ENCODE measurements at regions of chr1 and their contacts with region 1.

Region 1: DNA sequence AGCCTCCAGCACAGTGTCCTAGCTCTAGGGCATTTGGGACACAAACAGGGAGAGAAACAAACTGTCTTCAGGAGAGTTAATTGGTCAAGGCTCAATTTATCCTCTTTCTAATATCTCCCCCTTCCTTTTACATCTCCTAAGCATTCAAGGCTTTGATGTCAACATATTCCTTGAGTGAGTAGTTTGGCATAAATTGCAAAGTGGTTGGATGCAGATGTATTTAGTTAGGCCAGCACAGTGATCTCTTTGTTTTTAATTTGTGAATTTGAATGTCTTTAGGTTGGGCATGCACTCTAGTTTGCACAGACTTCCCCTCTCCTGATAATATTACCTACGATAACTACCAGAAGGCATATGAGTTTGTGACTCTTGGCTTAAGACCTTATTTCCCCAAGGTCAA is 12.5 kb upstream of the OLFML2B start:
- DNase-seq: no peak
- H3K4me3 ChIP-seq: no peak overlapping the region
- H3K4me3 Mint-ChIP-seq: no peak overlapping the region
- H3K27ac ChIP-seq: no peak overlapping the region
- H3K27ac Mint-ChIP-seq: no peak overlapping the region
- H3K4me1 ChIP-seq: no peaks in the 10 kb centered on the region
- H3K4me1 Mint-ChIP-seq: no peaks in the 10 kb centered on the region
- H3K27me3 ChIP-seq: no peaks in the 10 kb centered on the region
- H3K27me3 Mint-ChIP-seq: peaks cover 17 to 49% of the 10 kb centered on the region in 2 donors

Region 2: DNA sequence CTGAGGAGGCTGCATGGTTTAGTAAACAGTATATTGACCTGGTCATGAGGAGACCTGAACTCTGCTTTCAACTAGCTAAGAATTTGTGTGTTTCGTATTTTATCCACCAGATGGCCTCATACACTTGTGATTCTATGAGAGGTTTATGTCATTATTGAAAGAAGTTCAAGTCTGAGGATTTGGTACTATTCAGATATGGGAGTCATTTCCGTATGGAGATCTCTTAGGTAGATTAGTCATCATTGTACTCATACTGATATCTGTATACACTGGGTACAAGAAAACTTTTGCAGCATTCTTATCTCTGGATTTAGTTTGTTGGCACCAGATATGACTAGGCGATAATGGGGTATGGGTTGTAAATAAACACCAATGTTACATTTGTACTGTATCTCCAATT is 243.4 kb before region 1 on chr1:
- CTCF ChIA-PET with region 1: interaction called, 25 read pairs
- POLR2A ChIA-PET with region 1: no interaction called
- DNase-seq: peak in 2 of 5 donors; percentile 19 to 44
- H3K4me3 ChIP-seq: no peak overlapping the region
- H3K4me3 Mint-ChIP-seq: no peak overlapping the region
- H3K27ac ChIP-seq: no peak overlapping the region
- H3K27ac Mint-ChIP-seq: peak overlapping the region in 1 of 8 donors; percentile 39
- H3K4me1 ChIP-seq: no peaks in the 10 kb centered on the region
- H3K4me1 Mint-ChIP-seq: peaks cover 3 to 12% (median 10%) of the 10 kb centered on the region in 3 donors
- H3K27me3 ChIP-seq: no peaks in the 10 kb centered on the region
- H3K27me3 Mint-ChIP-seq: no peaks in the 10 kb centered on the region

Region 3: DNA sequence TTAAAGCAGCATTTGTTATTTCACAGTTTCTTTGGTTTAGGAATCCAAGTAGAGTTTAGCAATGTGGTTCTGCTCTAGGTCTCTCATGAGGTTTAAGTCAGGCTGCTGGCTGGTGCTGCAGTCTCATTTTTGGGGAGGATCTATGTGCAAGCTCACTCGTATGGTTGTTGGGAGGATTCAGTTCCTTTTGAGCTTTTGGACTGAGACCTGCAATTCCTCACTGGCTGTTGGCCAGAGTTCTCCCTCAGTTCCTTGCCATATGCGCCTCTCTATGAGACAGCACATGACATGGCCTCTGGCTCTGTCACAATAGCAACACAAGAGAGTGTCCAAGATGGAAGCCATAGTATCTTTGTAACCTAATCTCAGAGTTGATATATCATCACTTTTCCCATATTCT is 103.5 kb before region 1 on chr1:
- CTCF ChIA-PET with region 1: no interaction called
- POLR2A ChIA-PET with region 1: no interaction called
- DNase-seq: no peak
- H3K4me3 ChIP-seq: no peak overlapping the region
- H3K4me3 Mint-ChIP-seq: no peak overlapping the region
- H3K27ac ChIP-seq: no peak overlapping the region
- H3K27ac Mint-ChIP-seq: peak overlapping the region in 6 of 8 donors; percentile 2 to 52 (median 46)
- H3K4me1 ChIP-seq: peaks cover 46% of the 10 kb centered on the region
- H3K4me1 Mint-ChIP-seq: peaks cover 38 to 49% (median 38%) of the 10 kb centered on the region in 3 donors
- H3K27me3 ChIP-seq: no peaks in the 10 kb centered on the region
- H3K27me3 Mint-ChIP-seq: no peaks in the 10 kb centered on the region

Region 4: GRCh38 chr1:162193815-162194214 is 157.7 kb after region 1 on chr1:
- CTCF ChIA-PET with region 1: no interaction called
- POLR2A ChIA-PET with region 1: no interaction called
- DNase-seq: no peak
- H3K4me3 ChIP-seq: no peak overlapping the region
- H3K4me3 Mint-ChIP-seq: no peak overlapping the region
- H3K27ac ChIP-seq: no peak overlapping the region
- H3K27ac Mint-ChIP-seq: no peak overlapping the region
- H3K4me1 ChIP-seq: no peaks in the 10 kb centered on the region
- H3K4me1 Mint-ChIP-seq: no peaks in the 10 kb centered on the region
- H3K27me3 ChIP-seq: no peaks in the 10 kb centered on the region
- H3K27me3 Mint-ChIP-seq: peaks cover 7 to 22% of the 10 kb centered on the region in 2 donors